ENCODE measurements at regions of chr10 and their contacts with region 1.

Region 1: DNA sequence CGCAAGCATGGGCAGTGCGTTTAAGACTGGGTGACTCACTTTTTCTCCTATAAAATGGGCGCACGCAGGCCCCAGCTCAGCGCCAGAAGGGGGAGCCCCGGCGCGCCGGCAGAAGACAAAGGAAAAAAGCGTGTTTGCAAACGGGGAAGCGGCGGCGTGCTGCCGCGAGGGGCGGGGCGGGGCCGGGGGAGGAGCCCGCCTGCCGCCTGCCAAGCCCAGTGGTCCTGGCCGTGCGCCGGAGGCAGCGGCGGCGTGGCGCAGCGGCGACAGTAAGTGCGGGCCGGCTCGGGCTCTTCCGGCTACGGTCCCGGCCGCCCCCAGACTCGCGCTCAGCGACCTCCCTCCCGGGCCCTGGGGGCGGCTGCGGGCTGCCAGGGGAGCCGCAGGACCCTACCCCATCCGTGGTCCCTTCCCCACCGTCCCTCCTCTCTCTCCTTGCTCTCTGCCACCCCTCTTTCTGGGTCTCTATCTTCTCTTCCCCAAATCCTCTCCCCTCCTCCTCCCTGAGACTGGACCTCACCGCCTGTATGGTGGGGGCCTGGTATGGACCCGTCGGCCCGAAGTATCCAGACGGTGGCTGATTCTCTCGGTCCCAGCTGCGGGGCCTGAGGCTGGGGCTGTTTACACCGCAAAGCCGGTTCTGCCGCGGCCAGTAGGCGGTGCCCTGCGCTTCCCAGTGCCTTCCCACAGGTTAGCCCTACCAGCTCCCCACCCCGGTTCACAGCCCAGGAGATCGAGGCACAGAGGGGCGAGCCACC is at the start of gene SLC29A3:
- DNase-seq: peak; percentile 93
- H3K4me3 ChIP-seq: peak within 1 kb of the TSS; percentile 86 to 94
- H3K27ac ChIP-seq: peak within 1 kb of the TSS; percentile 34 to 87; a peak in 3 of 4 replicates
- H3K4me1 ChIP-seq: peaks cover 0 to 18% of the 10 kb centered on the region in 2 experiments; a peak in 1 of 4 replicates
- H3K27me3 ChIP-seq: no peaks in the 10 kb centered on the region
- CTCF ChIP-seq: peak; percentile 67
- EP300 ChIP-seq: no peak
- RAD21 ChIP-seq: peak; percentile 66
- polyA plus RNA-seq, gene SLC29A3: 3.8 and 4.6 TPM in 2 replicates

Region 2: DNA sequence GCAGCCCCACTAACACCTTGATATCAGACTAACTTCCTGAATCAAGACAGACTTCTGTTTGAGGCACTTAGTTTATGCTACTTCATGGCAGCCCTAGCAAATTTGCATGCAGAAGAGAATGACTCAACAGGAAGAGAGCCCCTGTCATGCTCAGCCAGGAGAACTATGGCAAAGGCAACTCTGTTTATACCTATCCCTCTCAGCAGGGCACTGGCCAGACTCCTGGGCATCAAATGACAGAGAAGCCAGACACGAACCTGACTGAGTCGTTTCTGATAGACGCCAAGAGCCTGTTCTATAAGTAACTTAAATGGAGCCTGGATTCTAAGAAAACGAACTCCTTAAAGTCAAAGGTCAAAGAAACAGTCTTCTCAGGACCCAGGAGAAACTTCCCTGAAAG is 157.8 kb before region 1 on chr10:
- CTCF ChIA-PET with region 1: no interaction called
- POLR2A ChIA-PET with region 1: no interaction called
- DNase-seq: no peak
- H3K4me3 ChIP-seq: no peak overlapping the region
- H3K27ac ChIP-seq: no peak overlapping the region
- H3K4me1 ChIP-seq: no peaks in the 10 kb centered on the region
- H3K27me3 ChIP-seq: no peaks in the 10 kb centered on the region
- CTCF ChIP-seq: no peak
- EP300 ChIP-seq: no peak
- RAD21 ChIP-seq: no peak

Region 3: GRCh38 chr10:71331736-71332135 is 12.5 kb after region 1 on chr10:
- CTCF ChIA-PET with region 1: interaction called, 99 read pairs
- POLR2A ChIA-PET with region 1: no interaction called
- DNase-seq: no peak
- H3K4me3 ChIP-seq: no peak overlapping the region
- H3K27ac ChIP-seq: no peak overlapping the region
- H3K4me1 ChIP-seq: no peaks in the 10 kb centered on the region; a peak in 1 of 4 replicates
- H3K27me3 ChIP-seq: no peaks in the 10 kb centered on the region
- CTCF ChIP-seq: no peak
- EP300 ChIP-seq: no peak
- RAD21 ChIP-seq: no peak

Region 4: GRCh38 chr10:71351628-71352319 is 32.6 kb after region 1 on chr10:
- CTCF ChIA-PET with region 1: interaction called, 13 read pairs
- POLR2A ChIA-PET with region 1: no interaction called
- DNase-seq: no peak
- H3K4me3 ChIP-seq: no peak overlapping the region
- H3K27ac ChIP-seq: no peak overlapping the region
- H3K4me1 ChIP-seq: no peaks in the 10 kb centered on the region; a peak in 1 of 4 replicates
- H3K27me3 ChIP-seq: no peaks in the 10 kb centered on the region
- CTCF ChIP-seq: no peak
- EP300 ChIP-seq: no peak
- RAD21 ChIP-seq: no peak

Region 5: GRCh38 chr10:71371750-71372166 is 52.5 kb after region 1 on chr10:
- CTCF ChIA-PET with region 1: interaction called, 28 read pairs
- POLR2A ChIA-PET with region 1: interaction called, 14 read pairs
- DNase-seq: no peak
- H3K4me3 ChIP-seq: no peak overlapping the region
- H3K27ac ChIP-seq: no peak overlapping the region
- H3K4me1 ChIP-seq: peaks cover 0 to under 1% of the 10 kb centered on the region in 2 experiments; a peak in 1 of 4 replicates
- H3K27me3 ChIP-seq: no peaks in the 10 kb centered on the region; the same call in 1 of the 2 replicates
- CTCF ChIP-seq: no peak
- EP300 ChIP-seq: no peak
- RAD21 ChIP-seq: no peak

Region 6: GRCh38 chr10:71383972-71384687 is 64.9 kb after region 1 on chr10:
- CTCF ChIA-PET with region 1: interaction called, 36 read pairs
- POLR2A ChIA-PET with region 1: interaction called, 6 read pairs
- DNase-seq: peak; percentile 84
- H3K4me3 ChIP-seq: no peak overlapping the region; a peak in 1 of 4 replicates
- H3K27ac ChIP-seq: no peak overlapping the region
- H3K4me1 ChIP-seq: no peaks in the 10 kb centered on the region
- H3K27me3 ChIP-seq: peaks cover 30% of the 10 kb centered on the region; the same call in 1 of the 2 replicates
- CTCF ChIP-seq: peak; percentile 89
- EP300 ChIP-seq: no peak
- RAD21 ChIP-seq: peak; percentile 80

Region 7: DNA sequence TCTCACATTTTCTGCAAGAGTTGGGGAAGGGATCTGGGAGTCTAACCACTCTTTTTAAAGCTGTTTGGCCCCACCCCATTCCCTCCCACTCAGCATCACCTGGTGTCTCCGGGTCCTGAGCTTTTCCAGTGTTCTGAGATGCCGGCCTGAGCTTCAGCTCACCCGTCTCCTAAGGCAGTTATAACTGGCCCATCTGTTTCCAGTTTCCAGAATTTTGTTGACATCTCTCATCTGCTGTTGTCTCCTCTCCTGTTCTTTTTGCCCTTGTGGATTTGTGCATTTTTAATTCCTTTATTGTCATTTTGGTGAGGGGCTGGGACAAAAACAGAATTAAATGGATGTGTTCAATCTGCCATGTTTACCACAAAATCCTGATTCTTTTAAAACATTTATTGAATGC is 239.8 kb after region 1 on chr10:
- CTCF ChIA-PET with region 1: no interaction called
- POLR2A ChIA-PET with region 1: no interaction called
- DNase-seq: no peak
- H3K4me3 ChIP-seq: no peak overlapping the region
- H3K27ac ChIP-seq: no peak overlapping the region
- H3K4me1 ChIP-seq: peaks cover 0 to 2% of the 10 kb centered on the region in 2 experiments; a peak in 2 of 4 replicates
- H3K27me3 ChIP-seq: peaks cover 27% of the 10 kb centered on the region
- CTCF ChIP-seq: no peak
- EP300 ChIP-seq: no peak
- RAD21 ChIP-seq: no peak

Region 8: DNA sequence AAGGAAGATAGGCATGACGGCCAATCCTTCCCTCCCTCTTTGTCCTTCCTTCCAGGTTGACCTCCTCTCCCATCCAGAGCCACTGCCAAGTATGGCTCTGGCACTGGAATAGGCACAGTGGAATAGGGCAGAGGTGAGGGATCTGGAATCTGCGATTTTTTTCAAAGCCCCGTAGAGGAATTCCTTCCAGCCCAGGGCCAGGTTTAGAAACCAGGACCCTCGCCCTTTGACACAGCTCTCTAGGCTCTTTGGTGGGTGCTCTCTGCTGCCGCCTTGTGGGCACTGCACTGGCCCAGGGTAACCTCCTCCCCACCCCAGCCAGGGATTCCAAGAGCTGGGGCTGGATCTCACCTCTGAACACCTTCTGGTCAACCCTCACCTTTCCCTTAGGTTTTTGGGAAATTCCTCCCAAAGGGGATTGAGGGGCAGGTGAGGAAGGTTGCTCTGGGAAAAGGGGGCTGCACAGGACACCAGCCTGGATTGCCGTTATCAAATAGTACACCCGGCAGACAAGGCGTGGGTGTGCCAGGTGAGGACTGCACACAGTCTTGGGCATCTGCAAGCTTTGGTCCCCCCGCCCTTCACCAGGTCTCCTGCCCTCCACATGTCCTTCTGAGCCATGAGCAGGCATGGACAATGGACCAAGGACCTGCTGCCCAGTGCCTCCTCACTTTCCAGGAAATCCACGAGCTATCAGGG is 377.6 kb after region 1 on chr10:
- CTCF ChIA-PET with region 1: interaction called, 33 read pairs
- POLR2A ChIA-PET with region 1: interaction called, 3 read pairs
- DNase-seq: peak; percentile 88
- H3K4me3 ChIP-seq: no peak overlapping the region; a peak in 1 of 4 replicates
- H3K27ac ChIP-seq: no peak overlapping the region
- H3K4me1 ChIP-seq: peaks cover 0 to 7% of the 10 kb centered on the region in 2 experiments; a peak in 1 of 4 replicates
- H3K27me3 ChIP-seq: peaks cover 28% of the 10 kb centered on the region; the same call in 1 of the 2 replicates
- CTCF ChIP-seq: peak; percentile 82
- EP300 ChIP-seq: no peak
- RAD21 ChIP-seq: peak; percentile 64